ENCODE measurements at regions of chr7 and their contacts with region 1.

Region 1: GRCh38 chr7:67045496-67045995 is 48.9 kb downstream of the TYW1 start:
- DNase-seq: no peak
- ATAC-seq: no peak
- H3K4me3 ChIP-seq: no peak overlapping the region
- H3K27ac ChIP-seq: no peak overlapping the region
- H3K4me1 ChIP-seq: peaks cover 8% of the 10 kb centered on the region
- H3K27me3 ChIP-seq: no peaks in the 10 kb centered on the region
- CTCF ChIP-seq: no peak

Region 2: GRCh38 chr7:66844552-66845378 is 200.8 kb before region 1 on chr7:
- CTCF ChIA-PET with region 1: no interaction called
- POLR2A ChIA-PET with region 1: interaction called, 10 read pairs
- in situ Hi-C with region 1: no loop called
- intact Hi-C with region 1: no loop called
- DNase-seq: peak; percentile 95
- ATAC-seq: peak; percentile 99
- H3K4me3 ChIP-seq: peak overlapping the region; percentile 84 to 99
- H3K27ac ChIP-seq: peak overlapping the region; percentile 97
- H3K4me1 ChIP-seq: peaks cover 6% of the 10 kb centered on the region; the same call in 1 of the 2 replicates
- H3K27me3 ChIP-seq: no peaks in the 10 kb centered on the region
- CTCF ChIP-seq: no peak

Region 3: GRCh38 chr7:67018940-67019339 is 26.6 kb before region 1 on chr7:
- CTCF ChIA-PET with region 1: no interaction called
- POLR2A ChIA-PET with region 1: interaction called, 21 read pairs
- in situ Hi-C with region 1: no loop called
- intact Hi-C with region 1: no loop called
- DNase-seq: no peak
- ATAC-seq: no peak
- H3K4me3 ChIP-seq: no peak overlapping the region
- H3K27ac ChIP-seq: no peak overlapping the region
- H3K4me1 ChIP-seq: no peaks in the 10 kb centered on the region
- H3K27me3 ChIP-seq: no peaks in the 10 kb centered on the region
- CTCF ChIP-seq: no peak

Region 4: DNA sequence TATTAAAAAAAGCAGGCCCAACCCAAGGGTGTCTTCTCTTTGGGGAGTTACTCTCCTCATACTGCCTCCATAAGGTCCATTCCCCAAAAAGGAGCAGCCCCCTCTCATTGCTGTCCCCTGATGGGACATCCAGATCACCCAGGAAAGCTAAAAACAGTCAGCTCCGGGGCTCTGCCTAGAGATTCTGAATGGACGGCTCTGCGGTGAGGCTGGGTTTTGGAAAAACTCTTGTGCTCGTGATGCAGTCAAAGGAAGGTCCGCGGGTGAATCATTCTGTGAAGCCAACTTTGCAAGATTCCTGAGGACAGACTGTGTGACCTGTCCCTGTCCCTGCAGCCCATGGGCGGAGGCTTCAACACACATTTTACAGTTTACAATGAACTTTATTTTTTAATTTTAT is 302.6 kb after region 1 on chr7:
- CTCF ChIA-PET with region 1: no interaction called
- POLR2A ChIA-PET with region 1: no interaction called
- in situ Hi-C with region 1: no loop called
- intact Hi-C with region 1: no loop called
- DNase-seq: no peak
- ATAC-seq: no peak
- H3K4me3 ChIP-seq: no peak overlapping the region
- H3K27ac ChIP-seq: no peak overlapping the region
- H3K4me1 ChIP-seq: no peaks in the 10 kb centered on the region
- H3K27me3 ChIP-seq: no peaks in the 10 kb centered on the region
- CTCF ChIP-seq: no peak

Measured in Panc1 (cell line).